Sigmoid colon (tissue), 7 donors: ENCODE measurements at regions of chr10 and their contacts with region 1.

Region 1: DNA sequence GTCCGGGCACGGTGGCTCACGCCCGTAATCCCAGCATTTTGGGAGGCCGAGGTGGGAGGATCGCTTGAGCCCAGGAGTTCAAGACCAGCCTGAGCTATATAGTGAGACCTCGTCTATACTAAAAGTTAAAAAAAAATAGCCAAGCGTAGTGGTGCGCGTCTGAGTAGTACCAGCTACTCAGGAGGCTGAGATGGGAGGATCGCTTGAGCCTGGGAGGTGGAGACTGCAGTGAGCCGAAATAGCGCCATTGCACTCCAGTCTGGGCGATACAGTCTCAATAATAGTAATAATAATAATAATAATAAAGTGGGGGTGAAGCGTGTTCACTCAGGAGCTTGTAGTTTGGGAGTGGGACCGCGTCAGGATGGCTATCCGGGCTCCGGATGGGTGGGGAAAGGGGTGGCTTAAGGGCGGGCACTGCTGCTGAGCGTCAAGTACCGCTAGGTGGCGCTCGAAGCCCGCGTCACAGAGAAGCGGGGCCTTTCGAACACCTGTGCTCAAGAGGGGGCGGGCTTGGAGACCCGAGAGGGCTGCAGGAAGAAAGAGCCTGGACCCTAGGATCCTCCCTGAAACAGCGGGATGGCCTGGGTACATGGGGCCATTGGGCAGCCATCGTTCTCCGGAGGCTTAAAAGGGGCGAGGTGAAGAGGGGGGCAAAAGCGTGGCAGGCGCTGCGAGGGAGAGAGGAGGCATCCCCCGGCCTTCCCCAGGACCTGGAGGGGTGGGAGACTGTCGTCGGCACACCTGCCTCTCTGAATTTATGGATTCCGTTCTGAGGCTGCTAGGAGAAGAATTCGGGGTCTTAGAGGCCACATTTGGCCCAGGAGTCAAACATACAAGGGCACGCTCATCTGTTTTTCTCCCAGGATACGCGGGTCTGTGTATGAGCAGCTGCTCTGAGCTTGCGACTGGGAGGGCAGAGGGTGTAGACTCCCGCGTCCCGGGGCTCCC is 14.5 kb downstream of the LBX1 start:
- DNase-seq: no peak
- H3K4me3 ChIP-seq: no peak overlapping the region
- H3K27ac ChIP-seq: no peak overlapping the region
- H3K4me1 ChIP-seq: peaks cover 0 to 50% (median 45%) of the 10 kb centered on the region in 4 donors
- H3K27me3 ChIP-seq: peaks cover 55 to 99% (median 91%) of the 10 kb centered on the region in 3 donors
- CTCF ChIP-seq: peak; percentile 57 to 95 (median 73)
- EP300 ChIP-seq: no peak
- POLR2A ChIP-seq: no peak

Region 2: GRCh38 chr10:101176577-101176976 is 38.1 kb before region 1 on chr10:
- intact Hi-C with region 1: no loop called
- DNase-seq: no peak
- H3K4me3 ChIP-seq: no peak overlapping the region
- H3K27ac ChIP-seq: no peak overlapping the region
- H3K4me1 ChIP-seq: no peaks in the 10 kb centered on the region
- H3K27me3 ChIP-seq: peaks cover 0 to 13% (median 9%) of the 10 kb centered on the region in 3 donors
- CTCF ChIP-seq: no peak
- EP300 ChIP-seq: no peak
- POLR2A ChIP-seq: no peak

Region 3: DNA sequence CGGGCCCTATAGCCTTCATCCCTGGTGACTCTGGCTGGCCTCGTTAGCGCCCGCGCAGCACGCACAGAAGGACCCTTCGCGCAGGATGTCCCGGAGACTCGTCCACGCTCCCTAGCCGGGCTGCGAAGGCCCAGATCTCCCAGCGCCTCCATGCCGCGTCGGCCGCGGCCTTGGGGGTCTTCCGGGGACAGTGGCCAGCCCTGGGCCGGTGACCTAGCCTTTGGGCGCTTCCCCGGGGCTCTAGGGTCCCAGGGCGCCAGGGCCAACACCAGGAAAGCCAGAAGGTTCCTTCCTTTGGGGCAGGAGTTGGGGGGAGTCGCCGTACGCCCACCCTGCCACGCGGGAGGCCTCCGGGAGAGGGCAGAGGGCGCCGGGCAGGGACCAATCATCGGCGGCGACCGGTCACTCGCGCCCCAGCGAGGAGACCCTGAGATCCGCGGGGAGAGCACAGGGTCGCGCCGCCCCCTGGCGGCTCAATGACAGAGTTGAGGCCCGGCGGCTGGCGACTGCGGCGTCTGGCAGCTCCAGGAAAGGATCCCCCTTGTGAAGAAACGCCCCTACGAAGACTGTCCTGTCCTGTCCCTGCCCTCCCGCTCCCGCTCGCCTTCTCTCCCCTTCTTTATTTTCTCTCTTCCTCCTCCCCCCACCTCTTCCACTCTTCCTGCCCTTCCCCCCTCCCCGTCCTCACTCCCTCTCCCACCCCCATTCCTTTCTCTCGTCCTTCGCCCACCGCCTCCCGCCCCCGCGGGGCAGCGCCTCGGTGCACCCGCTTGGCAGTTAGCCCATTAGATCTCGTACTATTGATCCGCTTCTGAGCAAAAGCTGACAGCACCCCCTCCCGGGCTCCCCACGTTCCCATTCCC is 76.8 kb after region 1 on chr10:
- intact Hi-C with region 1: loop called (anchors 5 kb)
- DNase-seq: no peak
- H3K4me3 ChIP-seq: peak overlapping the region; percentile 23 to 54 (median 48)
- H3K27ac ChIP-seq: no peak overlapping the region
- H3K4me1 ChIP-seq: peaks cover 0 to 22% (median 18%) of the 10 kb centered on the region in 4 donors
- H3K27me3 ChIP-seq: peaks cover 11 to 94% (median 68%) of the 10 kb centered on the region in 3 donors
- CTCF ChIP-seq: peak in 3 of 4 experiments; percentile 23 to 58 (median 44)
- EP300 ChIP-seq: no peak
- POLR2A ChIP-seq: no peak

Region 4: GRCh38 chr10:101441541-101442455 is 227.1 kb after region 1 on chr10:
- intact Hi-C with region 1: loop called (anchors 5 kb)
- DNase-seq: no peak
- H3K4me3 ChIP-seq: no peak overlapping the region
- H3K27ac ChIP-seq: no peak overlapping the region
- H3K4me1 ChIP-seq: peaks cover 0 to 4% (median 0%) of the 10 kb centered on the region in 4 donors
- H3K27me3 ChIP-seq: no peaks in the 10 kb centered on the region
- CTCF ChIP-seq: peak in 3 of 4 experiments; percentile 23 to 45 (median 28)
- EP300 ChIP-seq: no peak
- POLR2A ChIP-seq: no peak

Region 5: DNA sequence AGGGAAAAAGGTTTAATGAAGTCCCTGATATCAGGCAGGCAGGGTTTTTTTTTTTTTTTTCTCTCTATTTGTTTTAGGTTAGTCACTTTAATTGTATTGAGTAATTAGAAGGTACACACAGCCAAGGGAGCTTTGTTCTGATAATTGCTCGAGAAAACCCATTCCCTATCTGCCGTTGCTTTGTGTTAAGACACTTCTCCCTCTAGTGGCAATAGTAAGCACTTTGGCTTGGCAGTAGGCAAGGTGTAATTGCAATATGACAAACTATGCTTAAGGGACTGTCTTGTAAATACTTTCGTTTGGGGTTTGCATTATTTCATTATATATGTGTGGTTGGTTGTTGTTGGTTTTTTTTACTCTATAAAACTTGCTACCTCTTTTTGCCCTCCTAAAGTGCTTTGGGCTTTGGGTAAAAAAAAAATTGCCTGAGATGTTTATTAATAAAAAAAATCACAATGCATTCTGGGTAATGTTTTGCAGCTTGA is 252.6 kb after region 1 on chr10:
- intact Hi-C with region 1: loop called (anchors 2 kb)
- DNase-seq: no peak
- H3K4me3 ChIP-seq: no peak overlapping the region
- H3K27ac ChIP-seq: no peak overlapping the region
- H3K4me1 ChIP-seq: peaks cover 0 to 13% (median 2%) of the 10 kb centered on the region in 4 donors
- H3K27me3 ChIP-seq: no peaks in the 10 kb centered on the region
- CTCF ChIP-seq: peak in 3 of 4 experiments; percentile 68 to 74 (median 73)
- EP300 ChIP-seq: no peak
- POLR2A ChIP-seq: no peak

Region 6: GRCh38 chr10:101478956-101479355 is 264.2 kb after region 1 on chr10:
- intact Hi-C with region 1: no loop called
- DNase-seq: no peak
- H3K4me3 ChIP-seq: no peak overlapping the region
- H3K27ac ChIP-seq: no peak overlapping the region
- H3K4me1 ChIP-seq: no peaks in the 10 kb centered on the region
- H3K27me3 ChIP-seq: no peaks in the 10 kb centered on the region
- CTCF ChIP-seq: no peak
- EP300 ChIP-seq: no peak
- POLR2A ChIP-seq: no peak

Region 7: DNA sequence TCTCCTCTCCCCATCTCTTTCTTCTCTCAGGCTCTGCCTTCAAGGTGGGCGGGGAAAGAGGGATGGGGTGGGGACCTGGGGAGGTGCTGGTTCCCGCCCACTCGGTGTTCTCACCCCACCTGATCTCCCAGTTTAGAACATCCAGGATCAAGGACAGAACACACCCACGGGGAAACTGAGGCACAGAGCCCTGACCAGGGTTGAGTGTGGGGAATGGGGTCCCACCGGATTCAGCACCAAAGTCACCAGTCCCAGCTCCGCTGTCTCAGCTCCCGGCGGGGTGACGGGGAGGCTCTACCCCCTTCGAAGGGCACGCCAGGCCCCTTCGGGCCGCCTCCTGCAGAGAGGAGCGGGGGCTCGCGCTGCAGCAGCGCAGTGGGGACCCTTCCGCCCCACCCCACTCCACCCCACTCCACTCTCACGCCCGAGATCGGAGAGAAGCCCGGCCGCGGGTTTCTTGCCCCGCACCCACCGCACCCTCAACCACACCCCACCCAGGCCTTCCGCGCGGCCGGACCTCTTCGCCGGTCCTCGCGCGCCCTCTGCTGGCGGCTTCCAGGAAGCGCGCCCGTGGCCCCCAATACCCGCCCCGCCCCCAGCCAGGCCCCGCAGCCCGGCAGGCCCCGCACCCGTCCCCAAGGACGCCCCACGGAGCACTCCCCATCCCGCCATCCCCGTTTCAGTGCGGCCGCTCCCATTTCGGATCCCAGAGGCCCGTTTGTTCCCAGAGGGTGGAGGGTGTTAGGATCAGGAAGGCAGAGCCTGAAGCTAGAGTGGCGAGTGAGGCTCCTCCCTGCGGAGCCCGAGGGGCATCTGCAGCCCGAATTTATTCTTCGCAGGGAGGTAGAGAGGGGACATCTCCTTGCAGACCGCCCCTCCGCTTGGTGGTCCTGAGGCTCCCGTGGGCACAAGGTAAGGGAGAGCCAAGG is 355.4 kb after region 1 on chr10:
- intact Hi-C with region 1: loop called (anchors 1 kb)
- DNase-seq: peak; percentile 88
- H3K4me3 ChIP-seq: peak overlapping the region; percentile 13 to 61 (median 48)
- H3K27ac ChIP-seq: peak overlapping the region in 1 of 4 donors; percentile 28
- H3K4me1 ChIP-seq: peaks cover 0 to 26% (median 24%) of the 10 kb centered on the region in 4 donors
- H3K27me3 ChIP-seq: peaks cover 41 to 60% (median 52%) of the 10 kb centered on the region in 3 donors
- CTCF ChIP-seq: peak; percentile 53 to 97 (median 64)
- EP300 ChIP-seq: no peak
- POLR2A ChIP-seq: no peak